Esophagus muscularis mucosa (tissue), 4 donors: ENCODE measurements at regions of chr2 and their contacts with region 1.

Region 1: GRCh38 chr2:202033321-202034248 is at the start of gene FZD7:
- DNase-seq: peak; percentile 98
- H3K4me3 ChIP-seq: peak within 1 kb of the TSS; percentile 70 to 94 (median 80)
- H3K27ac ChIP-seq: peak within 1 kb of the TSS; percentile 96 to 99 (median 98)
- H3K4me1 ChIP-seq: peaks cover 25 to 57% (median 36%) of the 10 kb centered on the region in 4 donors
- H3K27me3 ChIP-seq: peaks cover 0 to 11% (median 0%) of the 10 kb centered on the region in 4 donors
- CTCF ChIP-seq: no peak
- EP300 ChIP-seq: no peak
- POLR2A ChIP-seq: peak; percentile 17
- total RNA-seq, gene FZD7: 51.5 to 67.7 (median 57.7) TPM

Region 2: GRCh38 chr2:201795607-201796477 is 237.7 kb before region 1 on chr2:
- intact Hi-C with region 1: loop called (anchors 10 kb)
- DNase-seq: no peak
- H3K4me3 ChIP-seq: no peak overlapping the region
- H3K27ac ChIP-seq: no peak overlapping the region
- H3K4me1 ChIP-seq: no peaks in the 10 kb centered on the region
- H3K27me3 ChIP-seq: no peaks in the 10 kb centered on the region
- CTCF ChIP-seq: peak; percentile 62 to 67 (median 63)
- EP300 ChIP-seq: no peak
- POLR2A ChIP-seq: no peak

Region 3: GRCh38 chr2:201860636-201861066 is 172.9 kb before region 1 on chr2:
- intact Hi-C with region 1: loop called (anchors 5 kb)
- DNase-seq: no peak
- H3K4me3 ChIP-seq: no peak overlapping the region
- H3K27ac ChIP-seq: peak overlapping the region in 1 of 4 donors; percentile 4
- H3K4me1 ChIP-seq: peaks cover 5 to 34% (median 28%) of the 10 kb centered on the region in 4 donors
- H3K27me3 ChIP-seq: no peaks in the 10 kb centered on the region
- CTCF ChIP-seq: peak; percentile 83 to 88 (median 83)
- EP300 ChIP-seq: no peak
- POLR2A ChIP-seq: no peak

Region 4: DNA sequence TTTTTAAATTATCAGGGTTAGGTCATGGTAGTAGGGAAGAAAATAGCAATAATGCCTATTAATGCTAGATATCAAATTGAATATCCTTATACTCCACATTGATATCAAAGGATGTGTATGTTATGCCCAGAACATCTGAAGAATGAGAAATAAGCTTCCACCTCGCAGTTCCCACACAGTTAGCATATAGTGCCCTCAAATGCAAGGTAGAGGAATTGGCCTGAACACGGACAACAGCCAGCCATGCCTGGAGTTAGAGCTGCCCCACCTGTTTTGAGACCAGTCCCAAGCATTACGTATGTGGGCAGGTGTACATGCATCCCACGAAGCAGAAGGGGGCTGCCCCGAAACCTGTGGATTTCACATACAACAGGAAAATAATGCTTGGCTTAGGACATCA is 125.2 kb after region 1 on chr2:
- intact Hi-C with region 1: loop called (anchors 5 kb)
- DNase-seq: no peak
- H3K4me3 ChIP-seq: no peak overlapping the region
- H3K27ac ChIP-seq: no peak overlapping the region
- H3K4me1 ChIP-seq: peaks cover 5 to 10% (median 10%) of the 10 kb centered on the region in 4 donors
- H3K27me3 ChIP-seq: no peaks in the 10 kb centered on the region
- CTCF ChIP-seq: peak; percentile 22 to 45 (median 36)
- EP300 ChIP-seq: no peak
- POLR2A ChIP-seq: no peak

Region 5: DNA sequence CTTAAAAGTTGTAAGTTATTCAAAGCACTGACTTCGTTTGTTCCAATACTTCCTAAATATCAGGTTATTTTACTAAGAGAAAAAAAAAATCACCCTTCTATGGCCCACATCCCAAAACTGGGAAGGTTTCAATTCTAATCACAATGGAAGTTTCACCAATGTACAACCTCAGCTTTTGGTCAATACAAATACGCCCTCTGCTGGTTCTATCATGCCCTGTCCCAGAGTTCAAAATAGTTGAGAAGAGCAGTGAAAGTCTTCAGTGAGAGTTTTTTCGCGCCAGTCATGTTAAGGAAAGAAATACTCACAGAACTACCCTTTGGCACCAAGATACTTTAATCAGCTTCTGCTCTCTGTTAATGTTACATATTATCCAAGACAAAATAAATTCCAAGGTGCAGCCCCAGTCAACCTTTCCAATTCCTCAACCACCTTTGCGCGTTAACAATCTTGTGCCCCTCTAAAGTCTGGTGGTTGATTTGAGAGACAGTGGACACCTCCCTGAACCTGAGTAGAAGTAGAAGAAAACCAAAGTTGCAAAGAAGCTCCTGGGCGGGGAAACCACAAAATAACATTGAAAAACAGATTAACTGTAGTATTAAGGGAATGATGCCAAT is 144.9 kb after region 1 on chr2:
- intact Hi-C with region 1: loop called (anchors 5 kb)
- DNase-seq: no peak
- H3K4me3 ChIP-seq: no peak overlapping the region
- H3K27ac ChIP-seq: no peak overlapping the region
- H3K4me1 ChIP-seq: no peaks in the 10 kb centered on the region
- H3K27me3 ChIP-seq: no peaks in the 10 kb centered on the region
- CTCF ChIP-seq: peak; percentile 81 to 87 (median 85)
- EP300 ChIP-seq: no peak
- POLR2A ChIP-seq: no peak